CD4-positive, alpha-beta T cell (primary cell): ENCODE measurements at regions of chrX and their contacts with region 1.

Region 1: GRCh38 chrX:48917139-48918001 is 1.5 kb downstream of the PIM2 start:
- DNase-seq: peak; percentile 79 to 94 (median 86)
- ATAC-seq: peak; percentile 33
- H3K4me3 ChIP-seq: peak overlapping the region; percentile 89
- H3K4me3 Mint-ChIP-seq: peak overlapping the region; percentile 98
- H3K27ac ChIP-seq: peak overlapping the region; percentile 61 to 80
- H3K27ac Mint-ChIP-seq: peak overlapping the region; percentile 95
- H3K4me1 ChIP-seq: peaks cover 69% of the 10 kb centered on the region
- H3K4me1 Mint-ChIP-seq: peaks cover 56% of the 10 kb centered on the region
- H3K27me3 ChIP-seq: no peaks in the 10 kb centered on the region
- H3K27me3 Mint-ChIP-seq: no peaks in the 10 kb centered on the region
- CTCF ChIP-seq: peak; percentile 79

Region 2: DNA sequence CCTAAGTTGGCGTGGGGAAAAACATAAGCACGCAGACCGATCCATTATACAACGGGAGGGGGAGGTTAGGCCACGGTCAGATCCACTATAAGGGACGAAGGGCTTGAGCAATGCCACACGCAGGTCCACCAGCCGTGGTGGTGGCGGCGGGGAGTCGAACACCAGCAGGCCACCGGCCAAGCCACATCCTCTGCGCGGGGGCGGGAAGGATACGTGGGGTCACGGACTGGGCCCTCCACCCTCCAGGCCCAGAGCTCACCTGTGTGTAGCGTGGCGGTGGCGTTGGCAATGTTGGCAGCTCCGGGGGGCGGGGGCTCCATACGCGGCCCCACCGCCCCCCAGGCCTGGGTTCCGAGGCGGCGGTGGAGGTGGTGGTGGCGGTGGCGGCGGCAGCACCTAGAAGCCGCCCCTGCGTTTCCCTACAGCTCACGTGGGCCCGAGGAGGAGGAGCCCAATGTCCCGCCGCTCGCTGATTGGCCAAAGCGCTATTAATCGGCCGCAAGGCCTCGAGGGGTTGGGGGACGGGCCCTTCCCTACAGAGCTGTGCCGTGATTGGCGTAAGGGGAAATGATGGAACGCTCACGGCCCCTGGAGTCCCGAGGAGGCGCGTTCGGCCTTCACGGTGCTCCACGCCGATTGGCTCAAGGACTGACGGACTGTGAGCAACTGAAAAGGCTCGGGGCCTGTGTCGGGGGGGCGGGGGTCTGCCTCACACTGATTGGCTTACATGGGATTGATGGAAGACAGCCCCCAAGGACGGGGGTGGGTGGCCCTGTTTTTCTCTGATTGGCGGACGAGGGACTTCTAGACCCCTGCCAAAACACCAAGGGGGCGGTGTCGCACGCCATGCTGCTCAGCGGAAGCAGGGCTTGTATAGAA is 1267.0 kb before region 1 on chrX and contains the start of gene ELK1:
- CTCF ChIA-PET with region 1: no interaction called
- POLR2A ChIA-PET with region 1: no interaction called
- intact Hi-C with region 1: loop called in 1 of 2 experiments (anchors 10 kb)
- DNase-seq: peak; percentile 75 to 96 (median 84)
- ATAC-seq: peak; percentile 88
- H3K4me3 ChIP-seq: peak within 1 kb of the TSS; percentile 83
- H3K4me3 Mint-ChIP-seq: peak within 1 kb of the TSS; percentile 94
- H3K27ac ChIP-seq: peak within 1 kb of the TSS; percentile 65 to 76
- H3K27ac Mint-ChIP-seq: peak within 1 kb of the TSS; percentile 89
- H3K4me1 ChIP-seq: peaks cover 29% of the 10 kb centered on the region
- H3K4me1 Mint-ChIP-seq: peaks cover 39% of the 10 kb centered on the region
- H3K27me3 ChIP-seq: no peaks in the 10 kb centered on the region
- H3K27me3 Mint-ChIP-seq: no peaks in the 10 kb centered on the region
- CTCF ChIP-seq: no peak
- total RNA-seq, gene ELK1: 38.9 to 40.5 TPM

Region 3: DNA sequence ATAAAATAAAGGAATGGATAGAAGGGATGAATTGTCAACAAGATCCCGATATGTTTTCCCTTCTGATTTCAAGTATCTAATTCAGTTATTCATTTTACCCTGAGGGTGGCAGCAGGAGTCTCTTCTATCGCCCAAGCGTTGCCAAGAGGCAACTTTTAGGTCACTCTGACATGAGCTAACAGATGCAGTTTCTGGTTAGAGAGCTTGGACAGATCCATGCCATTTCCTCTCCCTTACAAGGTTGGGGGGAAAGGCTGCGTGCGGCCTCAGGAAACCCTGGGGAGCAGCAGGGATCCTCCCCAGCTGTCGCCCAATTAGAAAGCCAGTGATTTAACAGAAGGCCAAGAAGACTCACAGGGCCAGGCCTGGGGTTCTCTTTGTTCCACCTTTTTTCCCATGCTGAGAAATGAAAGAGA is 269.0 kb before region 1 on chrX:
- CTCF ChIA-PET with region 1: interaction called, 4 read pairs
- POLR2A ChIA-PET with region 1: interaction called, 7 read pairs
- intact Hi-C with region 1: loop called (anchors 2 to 10 kb)
- DNase-seq: peak; percentile 5 to 74 (median 21)
- ATAC-seq: peak; percentile 78
- H3K4me3 ChIP-seq: no peak overlapping the region
- H3K4me3 Mint-ChIP-seq: no peak overlapping the region
- H3K27ac ChIP-seq: no peak overlapping the region
- H3K27ac Mint-ChIP-seq: no peak overlapping the region
- H3K4me1 ChIP-seq: peaks cover 3% of the 10 kb centered on the region
- H3K4me1 Mint-ChIP-seq: peaks cover 7% of the 10 kb centered on the region
- H3K27me3 ChIP-seq: no peaks in the 10 kb centered on the region
- H3K27me3 Mint-ChIP-seq: no peaks in the 10 kb centered on the region
- CTCF ChIP-seq: peak; percentile 51

Region 4: GRCh38 chrX:48891402-48892288 is 25.7 kb before region 1 on chrX:
- CTCF ChIA-PET with region 1: interaction called, 15 read pairs
- POLR2A ChIA-PET with region 1: interaction called, 19 read pairs
- intact Hi-C with region 1: loop called in 1 of 2 experiments (anchors 2 kb)
- DNase-seq: peak; percentile 52 to 90 (median 72)
- ATAC-seq: peak; percentile 88
- H3K4me3 ChIP-seq: peak overlapping the region; percentile 60
- H3K4me3 Mint-ChIP-seq: peak overlapping the region; percentile 86
- H3K27ac ChIP-seq: peak overlapping the region in 1 of 2 donors; percentile 29
- H3K27ac Mint-ChIP-seq: peak overlapping the region; percentile 71
- H3K4me1 ChIP-seq: peaks cover 27% of the 10 kb centered on the region
- H3K4me1 Mint-ChIP-seq: peaks cover 26% of the 10 kb centered on the region
- H3K27me3 ChIP-seq: no peaks in the 10 kb centered on the region
- H3K27me3 Mint-ChIP-seq: no peaks in the 10 kb centered on the region
- CTCF ChIP-seq: peak; percentile 40

Region 5: DNA sequence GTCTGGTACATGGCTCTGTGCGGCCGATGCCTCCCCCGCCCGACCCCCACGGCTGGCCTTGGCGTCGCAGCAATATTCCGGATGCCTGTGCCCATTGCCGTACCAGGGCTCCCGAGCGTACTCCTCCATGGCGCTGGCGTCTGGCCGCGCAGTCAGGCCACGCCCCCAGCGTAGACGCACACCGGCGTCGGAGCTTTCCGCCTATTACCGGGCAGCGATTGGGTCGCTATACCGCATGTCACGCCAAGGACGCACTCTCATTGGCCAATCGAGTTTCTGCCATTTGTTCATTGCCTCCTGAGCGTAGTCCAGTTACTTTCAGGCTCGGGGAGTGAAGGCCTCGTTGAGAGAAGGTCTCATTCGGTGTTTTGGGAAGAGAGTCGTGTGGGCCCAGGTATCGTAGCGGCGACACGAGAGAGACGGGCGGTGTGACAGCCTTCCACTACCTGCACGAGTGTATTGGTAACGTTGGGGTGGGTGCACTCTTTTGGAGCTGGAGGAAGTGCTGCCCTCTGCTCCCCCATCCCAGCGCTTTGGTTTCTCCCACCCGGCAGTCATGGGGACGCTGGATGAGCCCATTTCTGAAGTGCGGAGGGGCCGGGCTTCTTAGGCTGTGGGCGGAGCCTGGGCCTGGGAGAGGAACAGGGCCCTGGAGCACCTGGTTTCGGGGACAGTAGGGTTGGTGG is 19.6 kb before region 1 on chrX and contains the starts of genes PQBP1 and TIMM17B:
- CTCF ChIA-PET with region 1: interaction called, 15 read pairs
- POLR2A ChIA-PET with region 1: interaction called, 44 read pairs
- intact Hi-C with region 1: loop called in 1 of 2 experiments (anchors 2 kb)
- DNase-seq: peak; percentile 73 to 96 (median 84)
- ATAC-seq: peak; percentile 84
- H3K4me3 ChIP-seq: peak within 1 kb of the TSS; percentile 91
- H3K4me3 Mint-ChIP-seq: peak within 1 kb of the TSS; percentile 91
- H3K27ac ChIP-seq: peak within 1 kb of the TSS; percentile 93 to 98
- H3K27ac Mint-ChIP-seq: peak within 1 kb of the TSS; percentile 90
- H3K4me1 ChIP-seq: peaks cover 33% of the 10 kb centered on the region
- H3K4me1 Mint-ChIP-seq: peaks cover 27% of the 10 kb centered on the region
- H3K27me3 ChIP-seq: no peaks in the 10 kb centered on the region
- H3K27me3 Mint-ChIP-seq: no peaks in the 10 kb centered on the region
- CTCF ChIP-seq: no peak
- total RNA-seq, gene PQBP1: 73.0 to 76.6 TPM
- total RNA-seq, gene TIMM17B: 40.0 to 40.3 TPM

Region 6: GRCh38 chrX:48937054-48937907 is 19.9 kb after region 1 on chrX:
- CTCF ChIA-PET with region 1: interaction called, 10 read pairs
- POLR2A ChIA-PET with region 1: interaction called, 335 read pairs
- intact Hi-C with region 1: loop called (anchors 1 kb)
- DNase-seq: peak; percentile 77 to 94 (median 88)
- ATAC-seq: peak; percentile 68
- H3K4me3 ChIP-seq: peak overlapping the region; percentile 49
- H3K4me3 Mint-ChIP-seq: peak overlapping the region; percentile 82
- H3K27ac ChIP-seq: peak overlapping the region; percentile 92 to 93
- H3K27ac Mint-ChIP-seq: peak overlapping the region; percentile 98
- H3K4me1 ChIP-seq: peaks cover 85% of the 10 kb centered on the region
- H3K4me1 Mint-ChIP-seq: peaks cover 90% of the 10 kb centered on the region
- H3K27me3 ChIP-seq: no peaks in the 10 kb centered on the region
- H3K27me3 Mint-ChIP-seq: no peaks in the 10 kb centered on the region
- CTCF ChIP-seq: peak; percentile 40

Region 7: GRCh38 chrX:48945516-48946348 is 28.4 kb after region 1 on chrX:
- CTCF ChIA-PET with region 1: interaction called, 3 read pairs
- POLR2A ChIA-PET with region 1: interaction called, 335 read pairs
- intact Hi-C with region 1: loop called (anchors 1 to 5 kb)
- DNase-seq: peak; percentile 30 to 75 (median 52)
- ATAC-seq: peak; percentile 67
- H3K4me3 ChIP-seq: no peak overlapping the region
- H3K4me3 Mint-ChIP-seq: no peak overlapping the region
- H3K27ac ChIP-seq: peak overlapping the region in 1 of 2 donors; percentile 22
- H3K27ac Mint-ChIP-seq: peak overlapping the region; percentile 74
- H3K4me1 ChIP-seq: peaks cover 74% of the 10 kb centered on the region
- H3K4me1 Mint-ChIP-seq: peaks cover 49% of the 10 kb centered on the region
- H3K27me3 ChIP-seq: no peaks in the 10 kb centered on the region
- H3K27me3 Mint-ChIP-seq: no peaks in the 10 kb centered on the region
- CTCF ChIP-seq: peak; percentile 71

Region 8: DNA sequence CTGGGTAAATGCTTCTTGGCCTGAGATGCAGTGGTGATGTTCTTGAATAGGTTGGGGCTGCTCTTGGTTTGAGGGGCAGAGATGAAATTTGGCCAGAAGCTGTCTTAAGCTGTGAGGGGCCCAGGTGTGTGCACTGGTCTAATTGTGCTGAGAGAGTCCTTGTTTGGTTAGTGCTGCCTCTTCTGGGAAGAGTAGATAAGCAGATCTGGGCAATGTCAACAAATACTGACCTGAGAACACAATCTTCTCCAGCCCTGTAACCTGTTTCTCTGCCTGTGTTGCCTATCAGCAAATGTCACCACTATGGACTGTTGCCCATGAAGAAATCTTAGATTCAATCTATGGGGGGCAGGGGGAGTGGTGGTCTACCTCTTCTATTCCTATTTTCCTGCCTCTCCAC is 944.7 kb after region 1 on chrX:
- CTCF ChIA-PET with region 1: no interaction called
- POLR2A ChIA-PET with region 1: no interaction called
- intact Hi-C with region 1: no loop called
- DNase-seq: no peak
- ATAC-seq: no peak
- H3K4me3 ChIP-seq: no peak overlapping the region
- H3K4me3 Mint-ChIP-seq: no peak overlapping the region
- H3K27ac ChIP-seq: no peak overlapping the region
- H3K27ac Mint-ChIP-seq: no peak overlapping the region
- H3K4me1 ChIP-seq: no peaks in the 10 kb centered on the region
- H3K4me1 Mint-ChIP-seq: no peaks in the 10 kb centered on the region
- H3K27me3 ChIP-seq: no peaks in the 10 kb centered on the region
- H3K27me3 Mint-ChIP-seq: peaks cover 10% of the 10 kb centered on the region
- CTCF ChIP-seq: no peak